Posterior vena cava (tissue), 2 donors: ENCODE measurements at regions of chr15 and their contacts with region 1.

Region 1: GRCh38 chr15:65086017-65086679 is 9.6 kb downstream of the KBTBD13 start:
- DNase-seq: no peak

Region 2: DNA sequence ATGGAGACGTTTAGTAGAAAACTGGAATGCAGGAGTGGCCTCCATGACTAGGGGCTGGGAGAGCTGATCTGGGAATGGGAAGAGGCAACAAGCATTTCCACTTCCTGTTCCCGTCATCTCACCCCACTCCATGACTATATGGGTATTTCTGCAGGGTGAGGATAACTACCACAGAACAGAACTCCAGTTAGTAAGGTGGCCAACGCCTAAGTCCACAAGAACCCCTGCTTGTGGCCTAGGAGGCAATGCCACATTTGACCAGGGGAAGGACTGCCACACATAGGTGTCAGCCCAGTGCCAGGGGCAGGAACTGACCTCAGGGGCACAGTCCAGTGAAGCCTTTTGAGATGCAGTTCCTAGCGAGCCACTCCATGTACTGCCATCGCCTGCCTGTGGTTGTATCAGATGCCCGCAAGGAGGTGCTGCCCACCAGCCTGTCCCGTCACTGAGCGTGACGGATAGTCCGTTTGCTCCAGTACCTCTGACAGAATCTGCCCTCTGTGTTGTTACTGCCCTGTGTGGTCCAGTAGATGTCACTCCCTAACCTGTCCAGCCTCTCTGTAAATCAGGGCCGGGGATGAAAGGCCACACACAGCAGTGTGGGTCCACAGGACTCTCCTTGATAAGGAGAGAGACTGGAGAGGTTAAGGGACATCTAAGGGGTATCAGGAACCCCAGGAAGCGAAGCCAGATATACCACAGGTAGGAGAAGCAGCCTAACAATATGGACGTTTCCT is 53.2 kb before region 1 on chr15:
- intact Hi-C with region 1: loop called in 1 of 2 experiments (anchors 10 kb)
- DNase-seq: peak; percentile 84

Region 3: DNA sequence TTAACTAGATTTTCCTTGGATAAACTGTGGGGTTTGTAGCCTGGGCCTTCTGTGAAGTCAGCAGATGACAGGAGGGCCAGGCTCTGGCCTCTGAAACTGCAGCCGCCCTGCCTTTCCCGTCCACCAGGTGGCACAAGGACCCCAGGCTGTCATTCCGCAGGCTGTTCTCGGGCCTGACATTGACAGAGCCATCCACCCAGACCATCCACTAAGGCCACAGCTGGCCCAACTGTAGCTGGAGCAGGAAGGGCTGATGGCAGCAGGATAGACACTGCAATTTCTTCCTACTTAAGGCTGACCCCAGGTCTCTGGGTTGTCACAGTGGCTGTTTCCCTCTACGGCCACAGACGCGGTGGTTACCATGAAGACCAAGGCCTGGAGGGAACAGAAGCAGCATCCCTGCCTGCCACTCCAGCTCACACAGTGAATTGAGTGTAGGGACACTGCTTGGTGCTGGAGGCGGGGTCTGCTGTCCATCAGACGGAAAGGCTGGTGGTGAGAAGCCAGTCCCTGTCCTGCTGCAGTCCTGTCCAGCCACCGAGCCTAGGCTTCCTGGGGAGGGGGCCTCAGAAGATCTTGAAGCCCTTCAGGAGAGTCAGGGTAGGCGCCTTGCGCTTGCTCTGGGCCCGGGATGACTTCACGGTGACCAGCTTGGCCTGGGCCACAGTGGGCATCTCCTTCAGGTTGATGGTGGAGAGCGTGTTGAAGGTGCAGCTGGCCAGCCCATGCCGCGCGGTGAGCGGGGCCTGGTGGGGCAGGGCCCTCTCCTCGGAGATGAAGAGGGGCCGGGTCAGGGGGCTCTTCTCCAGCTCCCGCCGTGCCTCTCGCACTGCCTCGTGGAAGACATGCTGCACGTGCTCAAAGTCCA is 31.6 kb before region 1 on chr15:
- intact Hi-C with region 1: loop called in 1 of 2 experiments (anchors 5 kb)
- DNase-seq: peak; percentile 91

Region 4: GRCh38 chr15:65156692-65157091 is 70.5 kb after region 1 on chr15:
- intact Hi-C with region 1: no loop called
- DNase-seq: no peak